Activated B cell treated with CpG ODN at 0.5 μM for 24 hours (primary cell): ENCODE measurements at regions of chr12 and their contacts with region 1.

Region 1: DNA sequence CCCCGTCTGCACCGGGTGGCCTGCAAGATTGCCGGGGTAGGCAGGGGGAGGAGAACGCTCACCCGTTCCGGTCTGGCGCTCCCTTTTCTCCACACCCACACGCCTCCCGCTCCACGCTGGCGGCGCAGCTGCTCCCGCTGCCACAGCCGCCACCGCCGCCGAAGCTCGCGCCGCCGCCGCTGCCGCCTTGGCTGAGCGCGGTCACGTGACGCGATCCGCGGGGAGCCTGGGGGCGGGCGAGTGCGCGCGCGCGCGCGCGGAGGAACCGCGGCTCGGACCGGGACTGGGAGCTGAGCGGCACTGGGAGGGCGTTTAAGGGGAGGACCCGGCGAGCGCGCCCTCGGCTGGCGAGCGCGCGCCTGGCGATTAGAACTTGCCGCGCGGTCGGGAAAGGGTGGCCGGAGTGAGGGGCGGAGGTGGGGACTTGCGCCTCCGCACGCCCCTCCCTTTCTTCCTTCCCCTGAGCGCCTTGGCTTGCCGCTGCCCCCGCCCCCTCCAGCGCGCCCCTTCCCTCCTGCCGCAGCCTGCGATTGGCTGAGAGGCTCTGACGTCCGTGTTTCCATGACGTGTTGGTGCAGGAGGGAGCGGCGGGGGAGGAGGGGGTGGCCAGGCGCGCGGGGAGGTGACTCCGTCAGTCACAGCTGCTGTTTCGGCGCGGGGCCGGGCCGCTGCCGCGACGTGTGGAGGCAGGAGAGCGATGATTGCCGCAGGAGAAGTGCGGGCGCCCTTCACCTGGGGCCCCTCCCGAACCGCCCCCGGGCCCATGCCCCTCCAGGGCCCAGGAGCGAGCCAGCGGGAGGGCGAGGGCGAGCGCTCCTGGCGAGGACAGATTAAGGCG is 738 bp upstream of the ATP2B1 start:
- DNase-seq: peak; percentile 97
- ATAC-seq: peak; percentile 75
- H3K4me3 Mint-ChIP-seq: peak overlapping the region; percentile 91
- H3K27ac Mint-ChIP-seq: peak overlapping the region; percentile 94
- H3K4me1 Mint-ChIP-seq: peaks cover 40% of the 10 kb centered on the region
- H3K27me3 Mint-ChIP-seq: no peaks in the 10 kb centered on the region
- CTCF ChIP-seq: no peak

Region 2: DNA sequence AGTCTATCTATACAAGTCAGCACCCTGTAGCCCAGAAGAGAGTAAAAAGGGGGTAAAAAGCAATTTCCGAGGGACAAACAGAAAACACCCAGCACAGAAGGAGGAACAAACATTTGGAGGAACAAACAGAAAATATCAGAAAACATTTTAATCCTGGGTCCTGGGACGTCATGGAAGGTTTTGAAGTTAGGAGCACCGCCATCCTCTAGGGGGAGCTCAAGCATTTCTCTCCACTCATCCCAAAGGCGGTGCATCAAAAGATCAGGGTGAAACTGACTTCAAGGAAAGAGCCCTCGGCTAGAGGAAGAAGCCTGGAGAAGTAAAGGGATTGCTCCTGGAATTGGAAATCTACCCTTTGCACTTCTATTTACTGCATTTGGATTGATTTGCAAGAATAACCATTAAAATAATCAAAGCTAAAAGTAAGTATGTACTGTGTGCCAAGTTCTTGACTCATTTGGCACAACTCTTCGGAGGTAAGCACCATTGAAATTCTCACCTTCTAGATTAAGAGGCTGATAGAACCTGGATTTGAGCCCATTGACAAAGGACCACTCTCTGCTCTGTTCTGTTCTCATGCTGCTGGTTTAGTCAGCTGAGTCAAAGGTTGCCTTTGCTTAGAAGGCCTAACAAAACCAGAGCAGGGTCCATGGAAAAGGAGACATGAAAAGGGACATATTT is 166.3 kb before region 1 on chr12:
- CTCF ChIA-PET with region 1: interaction called, 4 read pairs
- POLR2A ChIA-PET with region 1: interaction called, 6 read pairs
- intact Hi-C with region 1: loop called (anchors 2 kb)
- DNase-seq: peak; percentile 22
- ATAC-seq: peak; percentile 86
- H3K4me3 Mint-ChIP-seq: no peak overlapping the region
- H3K27ac Mint-ChIP-seq: no peak overlapping the region
- H3K4me1 Mint-ChIP-seq: peaks cover 11% of the 10 kb centered on the region
- H3K27me3 Mint-ChIP-seq: no peaks in the 10 kb centered on the region
- CTCF ChIP-seq: peak; percentile 93

Region 3: GRCh38 chr12:89756585-89757321 is 47.4 kb after region 1 on chr12:
- CTCF ChIA-PET with region 1: interaction called, 5 read pairs
- POLR2A ChIA-PET with region 1: interaction called, 41 read pairs
- intact Hi-C with region 1: loop called (anchors 1 kb)
- DNase-seq: no peak
- ATAC-seq: peak; percentile 74
- H3K4me3 Mint-ChIP-seq: peak overlapping the region; percentile 25
- H3K27ac Mint-ChIP-seq: peak overlapping the region; percentile 96
- H3K4me1 Mint-ChIP-seq: peaks cover 62% of the 10 kb centered on the region
- H3K27me3 Mint-ChIP-seq: no peaks in the 10 kb centered on the region
- CTCF ChIP-seq: no peak

Region 4: DNA sequence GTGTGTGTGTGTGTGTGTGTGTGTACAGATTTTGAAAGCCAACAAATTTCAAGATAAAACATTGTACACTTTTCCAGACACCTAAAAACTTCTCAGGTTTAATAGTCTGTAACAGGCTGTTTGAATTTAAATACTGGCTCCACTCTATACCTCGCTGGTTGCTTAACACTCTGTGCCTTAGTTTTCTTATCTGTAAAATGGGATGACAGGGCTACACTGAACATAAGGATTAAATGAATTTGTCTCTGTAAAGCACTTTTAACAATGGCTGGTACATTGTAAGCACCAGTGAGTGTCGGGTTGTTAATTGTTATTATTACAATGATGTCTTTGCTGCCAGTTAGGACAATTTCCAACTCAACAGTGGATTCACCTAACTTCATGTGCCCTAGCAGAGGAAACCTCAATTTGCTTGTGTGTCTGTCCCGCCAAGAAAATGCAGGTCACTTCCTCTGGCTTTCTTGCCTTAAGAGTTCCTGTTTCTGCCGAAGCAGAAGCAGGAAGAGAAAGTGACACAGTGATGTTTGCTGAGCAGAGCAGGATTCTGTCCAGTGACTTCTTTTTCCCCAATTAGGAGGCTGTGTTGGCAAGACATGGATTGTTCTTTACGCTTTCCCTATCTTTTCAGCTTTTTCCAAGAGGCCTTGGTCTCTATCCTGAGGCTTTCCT is 153.3 kb after region 1 on chr12:
- CTCF ChIA-PET with region 1: interaction called, 4 read pairs
- POLR2A ChIA-PET with region 1: interaction called, 64 read pairs
- intact Hi-C with region 1: loop called (anchors 1 kb)
- DNase-seq: peak; percentile 30
- ATAC-seq: peak; percentile 76
- H3K4me3 Mint-ChIP-seq: peak overlapping the region; percentile 81
- H3K27ac Mint-ChIP-seq: peak overlapping the region; percentile 96
- H3K4me1 Mint-ChIP-seq: peaks cover 73% of the 10 kb centered on the region
- H3K27me3 Mint-ChIP-seq: no peaks in the 10 kb centered on the region
- CTCF ChIP-seq: no peak

Region 5: DNA sequence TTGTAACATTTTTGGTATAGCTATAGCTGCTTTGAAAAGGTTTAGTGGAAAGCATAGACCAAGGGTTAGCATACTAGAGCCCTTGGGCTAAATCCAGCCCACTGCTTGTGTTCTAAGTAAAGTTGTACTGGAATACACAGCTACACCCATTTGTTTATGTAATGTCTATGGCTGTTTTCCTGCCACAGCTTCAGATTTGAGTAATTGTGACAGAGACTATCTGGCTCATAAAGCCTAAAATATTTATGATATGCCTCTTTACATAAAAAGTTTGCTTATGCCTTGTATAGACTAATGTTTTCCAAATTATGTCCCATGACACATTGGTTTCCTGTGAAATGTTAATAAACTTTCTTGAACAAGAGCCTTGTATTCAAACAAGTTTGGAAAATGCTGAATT is 234.1 kb after region 1 on chr12:
- CTCF ChIA-PET with region 1: interaction called, 5 read pairs
- POLR2A ChIA-PET with region 1: interaction called, 62 read pairs
- intact Hi-C with region 1: no loop called
- DNase-seq: no peak
- ATAC-seq: no peak
- H3K4me3 Mint-ChIP-seq: no peak overlapping the region
- H3K27ac Mint-ChIP-seq: no peak overlapping the region
- H3K4me1 Mint-ChIP-seq: peaks cover 58% of the 10 kb centered on the region
- H3K27me3 Mint-ChIP-seq: no peaks in the 10 kb centered on the region
- CTCF ChIP-seq: no peak

Region 6: GRCh38 chr12:90102957-90103652 is 393.7 kb after region 1 on chr12:
- CTCF ChIA-PET with region 1: interaction called, 9 read pairs
- POLR2A ChIA-PET with region 1: interaction called, 20 read pairs
- intact Hi-C with region 1: loop called (anchors 2 kb)
- DNase-seq: no peak
- ATAC-seq: peak; percentile 75
- H3K4me3 Mint-ChIP-seq: peak overlapping the region; percentile 66
- H3K27ac Mint-ChIP-seq: peak overlapping the region; percentile 43
- H3K4me1 Mint-ChIP-seq: peaks cover 29% of the 10 kb centered on the region
- H3K27me3 Mint-ChIP-seq: no peaks in the 10 kb centered on the region
- CTCF ChIP-seq: no peak